PC-3 (cell line): ENCODE measurements at regions of chr10 and their contacts with region 1.

Region 1: DNA sequence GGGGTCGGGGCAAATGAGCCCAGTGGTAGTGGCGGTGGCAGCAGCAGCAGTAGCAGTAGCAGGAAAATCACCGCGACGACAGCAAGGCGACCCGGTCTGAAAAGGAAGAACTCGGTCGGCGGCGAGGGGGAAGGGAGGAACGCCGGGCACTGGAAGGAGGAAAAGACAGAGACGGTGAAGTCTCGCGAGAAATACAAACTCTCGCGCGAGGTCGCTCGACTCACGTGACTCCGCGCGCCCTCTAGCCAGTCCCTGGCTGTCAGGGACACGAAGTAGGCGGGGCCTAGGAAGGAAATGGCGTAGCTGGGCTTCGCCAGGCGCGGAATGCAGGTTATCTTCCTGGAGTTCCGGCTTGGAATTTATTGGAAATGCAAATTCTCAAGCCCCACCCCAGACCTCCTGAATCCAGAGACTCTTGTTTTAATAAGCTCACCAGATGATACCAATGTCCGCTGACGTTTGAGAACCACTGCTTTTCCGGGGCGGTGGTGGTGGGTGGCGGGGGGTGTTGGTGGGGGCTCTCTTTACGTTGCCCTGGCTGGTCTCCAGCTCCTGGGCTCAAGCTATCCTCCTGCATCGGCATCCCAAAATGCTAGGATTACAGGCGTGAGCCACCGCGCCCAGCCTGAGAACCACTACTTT is at the start of gene SMNDC1:
- DNase-seq: peak; percentile 98
- ATAC-seq: peak; percentile 90
- H3K4me3 ChIP-seq: peak within 1 kb of the TSS; percentile 92
- H3K27ac ChIP-seq: peak within 1 kb of the TSS; percentile 92
- H3K4me1 ChIP-seq: peaks cover 50% of the 10 kb centered on the region
- H3K27me3 ChIP-seq: no peaks in the 10 kb centered on the region
- CTCF ChIP-seq: no peak
- total RNA-seq, gene SMNDC1: 16.3 and 18.4 TPM in 2 replicates

Region 2: GRCh38 chr10:110210674-110211464 is 94.0 kb before region 1 on chr10:
- CTCF ChIA-PET with region 1: interaction called, 5 read pairs
- POLR2A ChIA-PET with region 1: interaction called, 12 read pairs
- intact Hi-C with region 1: no loop called
- DNase-seq: peak; percentile 95
- ATAC-seq: peak; percentile 64
- H3K4me3 ChIP-seq: peak overlapping the region; percentile 82
- H3K27ac ChIP-seq: peak overlapping the region; percentile 23
- H3K4me1 ChIP-seq: no peaks in the 10 kb centered on the region
- H3K27me3 ChIP-seq: no peaks in the 10 kb centered on the region
- CTCF ChIP-seq: no peak

Region 3: DNA sequence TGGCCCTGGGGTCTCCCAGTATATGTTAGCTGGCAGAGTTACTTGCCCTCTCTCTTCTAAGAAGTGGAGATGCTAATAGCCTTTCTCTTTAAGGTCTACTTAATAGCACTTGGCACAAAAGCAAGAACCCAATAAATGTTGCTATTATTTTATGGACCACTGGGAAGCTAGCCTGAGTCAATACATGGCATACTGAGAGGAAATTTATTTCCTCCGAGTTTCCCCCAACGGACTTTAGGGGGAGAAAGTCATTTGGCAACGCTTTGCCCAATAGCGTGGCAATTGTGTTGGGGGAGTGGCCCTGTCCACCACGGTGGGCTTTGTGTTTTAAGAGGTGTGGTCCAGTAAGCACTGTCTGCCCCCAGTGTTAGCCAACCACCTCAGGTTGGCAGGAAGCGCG is 87.2 kb after region 1 on chr10:
- CTCF ChIA-PET with region 1: interaction called, 14 read pairs
- POLR2A ChIA-PET with region 1: interaction called, 3 read pairs
- intact Hi-C with region 1: no loop called
- DNase-seq: peak; percentile 17
- ATAC-seq: peak; percentile 30
- H3K4me3 ChIP-seq: no peak overlapping the region
- H3K27ac ChIP-seq: peak overlapping the region; percentile 20; the same call in 1 of the 2 replicates
- H3K4me1 ChIP-seq: peaks cover 17% of the 10 kb centered on the region
- H3K27me3 ChIP-seq: no peaks in the 10 kb centered on the region
- CTCF ChIP-seq: no peak

Region 4: GRCh38 chr10:110567201-110568054 is 262.5 kb after region 1 on chr10 and contains the start of gene SMC3:
- CTCF ChIA-PET with region 1: no interaction called
- POLR2A ChIA-PET with region 1: no interaction called
- intact Hi-C with region 1: loop called (anchors 5 kb)
- DNase-seq: peak; percentile 85
- ATAC-seq: peak; percentile 89
- H3K4me3 ChIP-seq: peak within 1 kb of the TSS; percentile 91
- H3K27ac ChIP-seq: peak within 1 kb of the TSS; percentile 74
- H3K4me1 ChIP-seq: peaks cover 15% of the 10 kb centered on the region
- H3K27me3 ChIP-seq: no peaks in the 10 kb centered on the region
- CTCF ChIP-seq: no peak
- total RNA-seq, gene SMC3: 18.4 and 20.3 TPM in 2 replicates

Region 5: GRCh38 chr10:110636932-110637557 is 332.1 kb after region 1 on chr10:
- CTCF ChIA-PET with region 1: interaction called, 23 read pairs
- POLR2A ChIA-PET with region 1: no interaction called
- intact Hi-C with region 1: no loop called
- DNase-seq: no peak
- ATAC-seq: no peak
- H3K4me3 ChIP-seq: no peak overlapping the region
- H3K27ac ChIP-seq: no peak overlapping the region
- H3K4me1 ChIP-seq: peaks cover 20% of the 10 kb centered on the region
- H3K27me3 ChIP-seq: no peaks in the 10 kb centered on the region
- CTCF ChIP-seq: no peak

Region 6: GRCh38 chr10:110918643-110919363 is 613.9 kb after region 1 on chr10 and contains the start of gene BBIP1:
- CTCF ChIA-PET with region 1: no interaction called
- POLR2A ChIA-PET with region 1: no interaction called
- intact Hi-C with region 1: loop called (anchors 5 kb)
- DNase-seq: peak; percentile 98
- ATAC-seq: peak; percentile 83
- H3K4me3 ChIP-seq: peak within 1 kb of the TSS; percentile 83
- H3K27ac ChIP-seq: peak within 1 kb of the TSS; percentile 85
- H3K4me1 ChIP-seq: peaks cover 36% of the 10 kb centered on the region
- H3K27me3 ChIP-seq: no peaks in the 10 kb centered on the region
- CTCF ChIP-seq: no peak
- total RNA-seq, gene BBIP1: 12.0 and 19.6 TPM in 2 replicates